ENCODE measurements at regions of chr13 and their contacts with region 1.

Region 1: DNA sequence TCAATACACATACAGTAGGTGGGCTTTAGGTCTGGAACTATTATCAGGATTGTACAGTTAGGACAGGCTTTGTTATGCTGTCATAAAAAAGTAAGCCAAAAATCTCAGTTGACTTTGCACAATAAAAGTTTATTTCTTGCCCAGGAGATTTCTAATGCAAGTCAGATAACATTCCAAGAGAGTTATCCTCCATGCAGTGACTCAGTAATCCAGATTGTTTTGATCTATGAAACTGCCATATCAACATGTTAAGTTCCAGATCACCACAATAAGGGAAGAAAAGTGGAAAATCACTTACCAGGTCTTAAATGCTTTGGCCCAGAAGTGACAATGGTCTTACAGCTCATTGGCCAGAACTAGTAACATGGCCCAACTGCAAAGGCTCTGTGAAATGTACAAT is 636.2 kb upstream of the KLF12 start:
- DNase-seq: peak; percentile 22
- H3K4me3 Mint-ChIP-seq: no peak overlapping the region
- H3K27ac Mint-ChIP-seq: peak overlapping the region; percentile 57
- H3K4me1 Mint-ChIP-seq: peaks cover 38% of the 10 kb centered on the region
- H3K27me3 Mint-ChIP-seq: no peaks in the 10 kb centered on the region
- CTCF ChIP-seq: no peak

Region 2: GRCh38 chr13:73754727-73755292 is 1015.6 kb before region 1 on chr13:
- CTCF ChIA-PET with region 1: no interaction called
- POLR2A ChIA-PET with region 1: no interaction called
- intact Hi-C with region 1: loop called (anchors 5 kb)
- DNase-seq: peak; percentile 71
- H3K4me3 Mint-ChIP-seq: no peak overlapping the region
- H3K27ac Mint-ChIP-seq: no peak overlapping the region
- H3K4me1 Mint-ChIP-seq: peaks cover 5% of the 10 kb centered on the region
- H3K27me3 Mint-ChIP-seq: no peaks in the 10 kb centered on the region
- CTCF ChIP-seq: peak; percentile 61

Region 3: DNA sequence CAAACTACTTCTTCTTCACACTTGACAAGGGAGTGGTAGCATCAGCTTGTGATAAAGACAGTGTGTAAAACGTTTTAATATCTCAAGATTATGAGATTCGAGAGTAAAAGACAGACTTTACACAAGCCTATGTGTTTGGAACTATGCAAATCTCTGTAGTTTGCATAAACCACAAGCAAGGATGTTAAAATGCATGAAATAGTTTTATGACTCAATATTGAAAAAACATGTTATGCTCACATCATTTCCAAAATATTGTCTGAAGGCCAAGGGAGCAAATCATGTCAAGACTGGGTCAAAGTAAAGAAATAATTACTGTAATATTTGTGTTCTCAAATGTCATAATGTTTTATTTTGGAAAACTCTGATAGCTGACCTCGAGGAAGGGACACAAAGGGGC is 319.4 kb before region 1 on chr13:
- CTCF ChIA-PET with region 1: no interaction called
- POLR2A ChIA-PET with region 1: no interaction called
- intact Hi-C with region 1: no loop called
- DNase-seq: no peak
- H3K4me3 Mint-ChIP-seq: no peak overlapping the region
- H3K27ac Mint-ChIP-seq: no peak overlapping the region
- H3K4me1 Mint-ChIP-seq: peaks cover 19% of the 10 kb centered on the region
- H3K27me3 Mint-ChIP-seq: no peaks in the 10 kb centered on the region
- CTCF ChIP-seq: no peak

Region 4: GRCh38 chr13:74867460-74867859 is 97.1 kb after region 1 on chr13:
- CTCF ChIA-PET with region 1: no interaction called
- POLR2A ChIA-PET with region 1: no interaction called
- intact Hi-C with region 1: loop called (anchors 5 kb)
- DNase-seq: peak; percentile 48
- H3K4me3 Mint-ChIP-seq: no peak overlapping the region
- H3K27ac Mint-ChIP-seq: peak overlapping the region; percentile 57
- H3K4me1 Mint-ChIP-seq: peaks cover 26% of the 10 kb centered on the region
- H3K27me3 Mint-ChIP-seq: no peaks in the 10 kb centered on the region
- CTCF ChIP-seq: no peak

Region 5: DNA sequence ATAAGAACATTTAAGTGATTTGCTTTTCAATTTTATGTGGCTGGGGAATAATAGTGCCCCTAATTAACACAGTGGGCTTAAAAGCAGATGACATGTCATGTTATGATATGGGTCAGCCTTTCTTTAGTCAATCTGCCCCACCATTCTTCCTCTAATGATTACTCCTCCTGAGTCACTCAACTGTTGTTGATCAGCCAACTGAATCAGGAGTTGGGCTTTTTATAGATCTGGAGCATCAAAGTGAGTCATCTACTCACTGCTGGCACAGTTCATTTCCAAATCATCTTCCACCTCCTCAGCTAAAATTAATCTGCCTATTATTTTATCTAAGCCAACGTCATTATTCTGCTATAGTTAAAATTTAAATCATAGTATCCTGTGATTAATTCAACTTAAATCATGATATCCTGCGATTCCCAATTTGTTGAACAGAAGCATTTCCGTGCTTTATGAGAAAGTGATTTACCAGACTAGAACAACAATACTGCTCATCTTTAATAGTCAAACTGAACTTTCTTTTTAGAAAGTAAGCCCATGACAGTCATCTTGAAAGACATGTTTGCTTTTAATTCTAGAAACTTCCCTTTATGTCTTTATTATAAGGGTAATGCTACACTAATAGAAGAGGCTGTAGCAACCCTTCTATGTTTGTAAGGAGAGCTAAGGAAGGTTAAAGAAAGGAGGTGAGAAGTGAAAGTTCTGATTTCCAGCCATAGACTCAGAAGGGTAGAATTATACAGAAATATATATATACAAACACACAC is 160.2 kb after region 1 on chr13:
- CTCF ChIA-PET with region 1: no interaction called
- POLR2A ChIA-PET with region 1: no interaction called
- intact Hi-C with region 1: loop called (anchors 5 kb)
- DNase-seq: peak; percentile 77
- H3K4me3 Mint-ChIP-seq: no peak overlapping the region
- H3K27ac Mint-ChIP-seq: no peak overlapping the region
- H3K4me1 Mint-ChIP-seq: peaks cover 10% of the 10 kb centered on the region
- H3K27me3 Mint-ChIP-seq: no peaks in the 10 kb centered on the region
- CTCF ChIP-seq: no peak

Measured in MCF 10A (cell line).